Sigmoid colon (tissue), 7 donors: ENCODE measurements at regions of chr6 and their contacts with region 1.

Region 1: GRCh38 chr6:149717588-149718458 is at the start of gene LATS1:
- DNase-seq: peak; percentile 95
- H3K4me3 ChIP-seq: peak within 1 kb of the TSS; percentile 61 to 99 (median 94)
- H3K27ac ChIP-seq: peak within 1 kb of the TSS; percentile 97 to 100 (median 100)
- H3K4me1 ChIP-seq: peaks cover 0 to 41% (median 24%) of the 10 kb centered on the region in 4 donors
- H3K27me3 ChIP-seq: no peaks in the 10 kb centered on the region
- CTCF ChIP-seq: no peak
- EP300 ChIP-seq: peak in 2 of 4 donors; percentile 23 to 36
- POLR2A ChIP-seq: peak; percentile 81 to 86
- total RNA-seq, gene LATS1: 23.8 to 31.6 (median 25.2) TPM

Region 2: GRCh38 chr6:149565527-149566409 is 152.1 kb before region 1 on chr6 and contains the start of gene GINM1:
- intact Hi-C with region 1: loop called (anchors 5 kb)
- DNase-seq: peak; percentile 95
- H3K4me3 ChIP-seq: peak within 1 kb of the TSS; percentile 83 to 100 (median 94)
- H3K27ac ChIP-seq: peak within 1 kb of the TSS; percentile 94 to 99 (median 96)
- H3K4me1 ChIP-seq: peaks cover 0 to 16% (median 12%) of the 10 kb centered on the region in 4 donors
- H3K27me3 ChIP-seq: no peaks in the 10 kb centered on the region
- CTCF ChIP-seq: peak; percentile 31 to 61 (median 58)
- EP300 ChIP-seq: no peak
- POLR2A ChIP-seq: no peak
- total RNA-seq, gene GINM1: 61.6 to 82.4 (median 74.4) TPM

Region 3: DNA sequence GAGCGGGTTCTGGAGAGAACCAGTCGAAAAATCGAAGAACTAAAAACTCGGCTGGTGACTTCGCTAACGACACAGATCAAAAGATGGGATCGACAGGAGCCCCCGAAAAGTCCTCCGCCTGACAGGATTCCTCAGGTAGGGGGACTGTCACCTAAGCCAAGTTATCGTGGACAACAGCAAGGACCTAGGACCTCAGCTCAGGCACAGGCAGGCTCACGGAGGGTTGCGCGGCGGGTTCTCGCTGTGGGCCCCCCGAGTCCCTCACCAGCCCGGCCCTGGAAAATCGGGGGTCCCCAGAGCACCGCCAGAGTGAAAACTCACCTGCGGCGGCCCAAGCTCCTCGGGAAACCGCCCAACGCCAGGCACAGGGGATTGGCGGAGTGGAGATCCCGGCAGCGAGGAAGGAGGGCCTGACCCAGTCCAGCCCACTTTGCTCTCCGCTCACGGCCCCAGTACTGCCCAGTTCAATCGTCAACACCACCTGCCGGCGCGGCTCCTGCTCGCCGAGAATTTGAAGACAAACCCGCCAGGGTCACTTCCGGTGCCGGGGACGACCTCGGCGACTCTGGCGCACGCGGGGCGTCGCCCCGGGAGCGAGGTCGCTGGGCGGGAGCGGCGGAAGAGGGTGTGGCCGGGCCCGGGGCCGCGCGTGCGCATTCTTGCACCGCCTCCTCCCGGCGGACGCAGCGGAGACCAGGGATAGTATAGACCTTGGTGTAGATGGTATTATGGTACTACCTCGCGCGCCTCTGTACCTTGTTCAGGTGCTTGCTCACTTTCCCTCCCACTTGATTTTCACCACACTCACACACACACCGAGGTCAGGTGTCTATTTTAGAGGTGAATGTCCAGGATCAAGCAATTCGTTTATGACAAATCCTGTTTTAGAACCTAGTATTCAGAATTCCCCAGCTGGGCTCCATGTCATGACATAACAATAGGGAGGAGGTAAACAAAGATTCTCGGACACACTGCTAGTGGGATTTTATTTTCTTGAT is 69.4 kb before region 1 on chr6 and contains the start of gene KATNA1:
- intact Hi-C with region 1: loop called (anchors 5 kb)
- DNase-seq: peak; percentile 89
- H3K4me3 ChIP-seq: peak within 1 kb of the TSS; percentile 78 to 98 (median 87)
- H3K27ac ChIP-seq: peak within 1 kb of the TSS; percentile 75 to 85 (median 82)
- H3K4me1 ChIP-seq: peaks cover 0 to 20% (median 12%) of the 10 kb centered on the region in 4 donors
- H3K27me3 ChIP-seq: no peaks in the 10 kb centered on the region
- CTCF ChIP-seq: no peak
- EP300 ChIP-seq: no peak
- POLR2A ChIP-seq: peak; percentile 24 to 58
- total RNA-seq, gene KATNA1: 17.5 to 22.5 (median 20.6) TPM

Region 4: GRCh38 chr6:149746147-149746946 is 28.5 kb after region 1 on chr6 and contains the start of gene NUP43:
- intact Hi-C with region 1: loop called (anchors 2 kb)
- DNase-seq: peak; percentile 96
- H3K4me3 ChIP-seq: peak within 1 kb of the TSS; percentile 64 to 83 (median 72)
- H3K27ac ChIP-seq: peak within 1 kb of the TSS; percentile 76 to 86 (median 78)
- H3K4me1 ChIP-seq: peaks cover 0 to 36% (median 27%) of the 10 kb centered on the region in 4 donors
- H3K27me3 ChIP-seq: no peaks in the 10 kb centered on the region
- CTCF ChIP-seq: peak; percentile 46 to 85 (median 68)
- EP300 ChIP-seq: no peak
- POLR2A ChIP-seq: peak in 1 of 2 donors; percentile 9
- total RNA-seq, gene NUP43: 18.3 to 56.3 (median 33.3) TPM

Region 5: GRCh38 chr6:149863697-149864577 is 146.1 kb after region 1 on chr6 and contains the start of gene LRP11:
- intact Hi-C with region 1: loop called (anchors 5 kb)
- DNase-seq: peak; percentile 93
- H3K4me3 ChIP-seq: peak within 1 kb of the TSS; percentile 30 to 89 (median 72)
- H3K27ac ChIP-seq: peak within 1 kb of the TSS; percentile 90 to 97 (median 94)
- H3K4me1 ChIP-seq: peaks cover 0 to 29% (median 19%) of the 10 kb centered on the region in 4 donors
- H3K27me3 ChIP-seq: no peaks in the 10 kb centered on the region
- CTCF ChIP-seq: no peak
- EP300 ChIP-seq: no peak
- POLR2A ChIP-seq: no peak
- total RNA-seq, gene LRP11: 17.2 to 71.7 (median 21.5) TPM

Region 6: DNA sequence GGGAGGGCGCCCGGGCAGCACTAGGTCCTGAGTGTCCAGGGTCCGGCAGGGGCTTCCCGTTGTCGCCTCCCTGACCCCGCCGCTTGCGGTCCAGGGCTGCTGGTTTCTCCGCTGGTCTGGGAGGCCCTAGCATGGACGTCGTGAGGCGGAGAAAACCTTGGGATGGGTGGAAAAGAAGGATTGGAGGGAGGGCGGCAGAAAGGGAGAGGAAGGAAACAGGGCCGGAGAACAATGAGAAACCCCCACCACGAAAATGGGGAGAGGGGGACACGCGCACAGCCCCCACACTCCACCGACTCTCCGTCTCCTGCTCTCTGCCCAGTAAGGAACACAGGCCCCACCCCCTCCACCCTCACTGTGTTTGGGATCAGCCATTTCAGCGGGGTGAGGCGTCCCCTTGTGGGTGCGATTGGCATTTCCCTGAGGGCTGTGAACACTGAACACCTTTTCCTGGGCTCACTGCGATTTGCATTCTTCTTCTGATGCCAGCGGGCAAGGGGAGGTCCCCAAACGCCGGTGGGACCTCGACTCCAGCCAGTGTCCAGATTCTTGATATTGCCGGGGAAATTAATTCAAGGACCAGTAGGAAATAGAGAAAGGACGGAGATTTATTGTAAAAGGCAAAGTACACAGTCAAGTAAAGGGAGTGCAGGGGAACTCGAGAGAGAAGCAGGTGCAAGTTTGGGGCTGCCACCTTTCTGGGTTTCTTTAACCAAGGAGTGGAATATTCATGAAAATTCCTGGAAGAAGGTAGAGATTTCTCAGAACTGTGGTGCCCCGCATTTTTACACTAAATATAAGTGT is 208.4 kb after region 1 on chr6:
- intact Hi-C with region 1: loop called (anchors 10 kb)
- DNase-seq: peak; percentile 94
- H3K4me3 ChIP-seq: peak overlapping the region; percentile 33 to 58 (median 50)
- H3K27ac ChIP-seq: peak overlapping the region in 3 of 4 donors; percentile 27 to 65 (median 33)
- H3K4me1 ChIP-seq: peaks cover 0 to 31% (median 25%) of the 10 kb centered on the region in 4 donors
- H3K27me3 ChIP-seq: peaks cover 0 to 30% (median 17%) of the 10 kb centered on the region in 3 donors
- CTCF ChIP-seq: peak; percentile 94 to 98 (median 96)
- EP300 ChIP-seq: no peak
- POLR2A ChIP-seq: no peak

Region 7: DNA sequence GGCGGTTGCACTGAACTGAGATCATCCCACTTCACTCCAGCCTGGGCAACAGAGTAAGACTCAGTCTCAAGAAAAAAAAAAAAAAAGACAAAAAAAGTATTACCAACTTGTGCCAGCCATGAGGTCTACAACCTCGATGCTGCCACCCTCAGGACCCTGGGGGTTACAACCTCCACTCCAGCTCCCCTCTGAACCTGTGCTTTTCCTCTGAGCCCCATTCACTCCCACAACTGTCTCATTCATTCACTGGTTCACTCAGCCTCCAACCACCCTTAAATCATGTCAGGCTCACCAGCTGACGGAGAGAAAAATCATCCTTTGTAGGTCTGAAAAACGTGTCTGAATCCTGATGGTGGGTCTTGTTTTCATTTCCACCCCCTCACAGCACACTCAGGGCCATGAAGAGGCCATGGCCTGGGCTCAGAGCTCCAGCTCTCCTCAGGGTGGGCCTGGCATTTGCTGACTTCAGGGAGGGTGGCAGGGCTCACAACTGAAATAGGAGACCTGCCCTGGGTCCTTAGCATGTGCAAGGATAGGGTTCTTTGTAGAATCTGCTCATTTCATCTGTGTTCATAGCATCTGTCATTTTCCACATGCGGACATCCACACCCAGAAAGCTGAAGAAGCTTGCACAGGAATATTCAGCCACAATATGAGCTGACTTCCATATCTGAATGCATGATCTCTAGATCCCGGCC is 244.1 kb after region 1 on chr6:
- intact Hi-C with region 1: no loop called
- DNase-seq: no peak
- H3K4me3 ChIP-seq: no peak overlapping the region
- H3K27ac ChIP-seq: no peak overlapping the region
- H3K4me1 ChIP-seq: peaks cover 0 to 28% (median 26%) of the 10 kb centered on the region in 4 donors
- H3K27me3 ChIP-seq: peaks cover 22 to 95% (median 56%) of the 10 kb centered on the region in 3 donors
- CTCF ChIP-seq: no peak
- EP300 ChIP-seq: no peak
- POLR2A ChIP-seq: no peak

Region 8: DNA sequence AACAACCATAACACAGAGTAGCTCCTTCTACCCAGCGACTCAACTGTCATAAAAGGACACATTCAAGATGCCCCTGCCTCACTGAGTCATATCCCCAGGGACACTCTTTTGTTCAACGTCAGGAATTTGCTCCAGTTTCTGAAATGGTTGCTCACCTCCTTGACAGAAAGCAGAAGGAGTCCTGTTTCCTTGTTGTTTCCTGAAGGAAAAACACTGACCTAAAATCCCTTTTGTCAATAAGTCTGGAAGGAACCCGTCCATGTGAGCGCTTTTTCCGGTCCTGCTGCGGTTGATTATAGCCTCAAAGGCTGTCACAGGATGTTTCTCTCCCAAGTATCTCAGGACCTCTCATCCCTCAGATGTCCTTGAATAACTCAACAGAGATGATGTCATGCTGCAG is 768.2 kb after region 1 on chr6:
- intact Hi-C with region 1: no loop called
- DNase-seq: no peak
- H3K4me3 ChIP-seq: no peak overlapping the region
- H3K27ac ChIP-seq: no peak overlapping the region
- H3K4me1 ChIP-seq: peaks cover 0 to 6% (median 0%) of the 10 kb centered on the region in 4 donors
- H3K27me3 ChIP-seq: no peaks in the 10 kb centered on the region
- CTCF ChIP-seq: no peak
- EP300 ChIP-seq: no peak
- POLR2A ChIP-seq: no peak